Esophagus squamous epithelium (tissue), 5 donors: ENCODE measurements at regions of chr18 and their contacts with region 1.

Region 1: DNA sequence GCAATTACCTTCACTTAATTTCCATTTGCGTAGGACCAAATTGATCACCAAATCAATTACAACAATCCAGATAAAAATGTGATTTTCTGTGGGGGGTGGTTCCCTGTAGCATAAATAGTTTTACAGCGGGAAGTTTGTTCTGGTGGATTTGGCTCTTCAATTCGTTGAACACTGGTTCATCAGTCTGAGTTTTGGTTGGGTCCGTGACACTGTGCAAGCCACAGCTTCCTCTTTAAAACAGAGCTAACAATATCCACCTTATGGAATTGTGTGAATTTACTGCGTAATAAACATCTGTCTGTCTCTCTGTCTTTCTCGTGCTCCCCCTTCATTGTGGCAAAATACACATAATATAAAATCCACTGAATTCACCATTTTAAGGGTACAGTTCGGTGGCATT is 310.8 kb downstream of the TGIF1 start:
- DNase-seq: no peak
- H3K4me3 ChIP-seq: no peak overlapping the region
- H3K27ac ChIP-seq: no peak overlapping the region
- H3K4me1 ChIP-seq: no peaks in the 10 kb centered on the region
- H3K27me3 ChIP-seq: no peaks in the 10 kb centered on the region
- CTCF ChIP-seq: no peak
- POLR2A ChIP-seq: no peak

Region 2: GRCh38 chr18:3511922-3512372 is 248.8 kb before region 1 on chr18:
- intact Hi-C with region 1: no loop called
- DNase-seq: no peak
- H3K4me3 ChIP-seq: no peak overlapping the region
- H3K27ac ChIP-seq: no peak overlapping the region
- H3K4me1 ChIP-seq: peaks cover 6 to 21% (median 8%) of the 10 kb centered on the region in 3 donors
- H3K27me3 ChIP-seq: peaks cover 0 to 29% (median 0%) of the 10 kb centered on the region in 4 donors
- CTCF ChIP-seq: no peak
- POLR2A ChIP-seq: no peak

Region 3: DNA sequence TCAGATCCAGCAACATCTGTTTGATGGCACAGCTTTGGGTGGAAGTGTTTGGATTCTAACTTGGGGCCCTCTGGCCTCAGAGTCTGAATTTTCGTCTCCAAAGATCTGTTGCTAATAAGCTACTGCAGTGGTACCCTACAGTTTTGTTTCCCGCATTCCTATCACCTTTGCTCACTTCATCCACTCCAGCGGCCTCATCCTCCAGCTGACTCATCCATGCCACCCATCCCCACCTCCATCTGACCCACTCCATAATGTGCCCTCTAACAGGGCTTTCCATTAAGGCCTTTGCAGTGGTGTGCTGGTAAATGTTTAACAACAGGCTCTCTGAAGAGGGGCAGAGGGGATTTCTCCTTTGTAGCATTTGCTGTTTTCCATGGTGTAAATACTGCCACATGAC is 85.3 kb before region 1 on chr18:
- intact Hi-C with region 1: no loop called
- DNase-seq: no peak
- H3K4me3 ChIP-seq: no peak overlapping the region
- H3K27ac ChIP-seq: no peak overlapping the region
- H3K4me1 ChIP-seq: peaks cover 0 to 8% (median 4%) of the 10 kb centered on the region in 3 donors
- H3K27me3 ChIP-seq: no peaks in the 10 kb centered on the region
- CTCF ChIP-seq: no peak
- POLR2A ChIP-seq: no peak

Region 4: GRCh38 chr18:3869848-3870247 is 109.1 kb after region 1 on chr18:
- intact Hi-C with region 1: loop called (anchors 10 kb)
- DNase-seq: no peak
- H3K4me3 ChIP-seq: no peak overlapping the region
- H3K27ac ChIP-seq: no peak overlapping the region
- H3K4me1 ChIP-seq: no peaks in the 10 kb centered on the region
- H3K27me3 ChIP-seq: no peaks in the 10 kb centered on the region
- CTCF ChIP-seq: peak in 5 of 6 experiments; percentile 32 to 64 (median 36)
- POLR2A ChIP-seq: no peak

Region 5: GRCh38 chr18:4004183-4004829 is 243.6 kb after region 1 on chr18:
- intact Hi-C with region 1: loop called (anchors 10 kb)
- DNase-seq: no peak
- H3K4me3 ChIP-seq: no peak overlapping the region
- H3K27ac ChIP-seq: no peak overlapping the region
- H3K4me1 ChIP-seq: no peaks in the 10 kb centered on the region
- H3K27me3 ChIP-seq: no peaks in the 10 kb centered on the region
- CTCF ChIP-seq: no peak
- POLR2A ChIP-seq: no peak

Region 6: DNA sequence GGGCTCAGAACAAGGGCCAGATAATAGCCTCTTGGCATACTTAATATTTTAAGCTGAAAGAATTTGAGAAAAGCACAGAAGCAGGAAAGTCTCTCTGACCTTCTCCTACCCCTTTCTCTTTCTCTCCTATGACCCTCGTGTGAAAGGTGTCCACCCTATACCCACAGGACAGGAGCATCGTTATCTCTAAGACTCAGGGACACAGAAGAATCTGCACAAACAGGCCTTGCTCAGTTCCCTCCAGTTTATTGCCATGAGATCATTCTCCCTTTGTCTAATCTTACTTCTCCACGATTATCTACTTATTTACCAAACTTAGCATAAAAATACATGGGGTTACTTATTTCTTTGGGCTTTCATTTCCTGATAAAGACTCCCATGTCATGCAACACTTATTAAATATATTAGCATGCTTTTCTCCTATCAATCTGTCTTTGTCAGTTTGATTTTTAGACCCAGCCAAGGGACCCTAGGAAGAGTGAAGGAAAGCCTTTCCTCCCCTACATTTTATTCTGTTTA is 323.7 kb after region 1 on chr18:
- intact Hi-C with region 1: no loop called
- DNase-seq: no peak
- H3K4me3 ChIP-seq: no peak overlapping the region
- H3K27ac ChIP-seq: no peak overlapping the region
- H3K4me1 ChIP-seq: no peaks in the 10 kb centered on the region
- H3K27me3 ChIP-seq: no peaks in the 10 kb centered on the region
- CTCF ChIP-seq: no peak
- POLR2A ChIP-seq: no peak